ENCODE measurements at regions of chr4 and their contacts with region 1.

Region 1: DNA sequence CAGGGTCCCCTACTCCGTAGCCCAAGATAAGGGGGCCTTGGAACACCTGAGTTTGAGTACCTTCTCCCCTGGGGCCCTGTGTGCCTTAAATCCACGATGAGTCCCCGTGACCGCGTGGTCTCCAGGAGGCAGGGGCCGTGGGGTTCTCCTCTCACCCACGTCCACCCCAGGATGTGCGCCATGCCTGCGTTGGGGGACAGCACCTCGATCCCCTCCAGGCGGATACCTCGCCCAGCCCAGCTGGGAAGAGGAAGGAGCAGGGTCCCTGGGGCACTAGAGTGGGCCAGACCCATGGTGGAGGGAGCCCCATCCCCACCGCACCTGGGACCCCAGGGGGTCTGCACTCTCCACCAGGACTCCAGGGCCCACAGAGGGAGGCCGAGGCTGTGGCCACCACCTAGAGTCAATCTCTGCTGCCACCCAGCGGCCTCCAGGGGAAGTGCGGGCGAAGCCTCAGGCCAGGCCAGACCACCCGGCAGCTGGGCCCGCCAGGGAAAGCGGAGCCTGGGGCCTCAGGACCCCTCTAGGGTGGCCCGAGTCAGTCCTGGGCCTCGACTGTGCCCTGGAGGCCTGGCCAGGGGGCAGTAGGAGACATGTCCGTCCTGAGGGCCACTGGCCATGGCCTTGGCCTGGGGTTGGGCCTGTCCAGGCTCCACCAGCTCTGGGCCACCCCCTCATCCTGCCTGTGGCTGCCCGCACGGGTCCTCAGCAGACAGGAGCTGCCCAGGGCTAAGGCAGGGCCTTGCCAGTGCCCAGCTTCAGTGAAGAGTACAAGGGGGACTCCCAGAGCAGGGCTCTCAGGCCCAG is 55.0 kb downstream of the FAM53A start:
- DNase-seq: peak; percentile 72 to 88 (median 83)
- ATAC-seq: peak; percentile 96
- H3K4me3 ChIP-seq: no peak overlapping the region
- H3K27ac ChIP-seq: no peak overlapping the region
- H3K4me1 ChIP-seq: peaks cover 12 to 36% of the 10 kb centered on the region in 2 experiments; a peak in 4 of 5 replicates
- H3K27me3 ChIP-seq: peaks cover 0 to 5% of the 10 kb centered on the region in 2 experiments; a peak in 1 of 5 replicates
- CTCF ChIP-seq: peak; percentile 88 to 94 (median 91)
- EP300 ChIP-seq: no peak
- POLR2A ChIP-seq: no peak
- RAD21 ChIP-seq: peak; percentile 73 to 87

Region 2: DNA sequence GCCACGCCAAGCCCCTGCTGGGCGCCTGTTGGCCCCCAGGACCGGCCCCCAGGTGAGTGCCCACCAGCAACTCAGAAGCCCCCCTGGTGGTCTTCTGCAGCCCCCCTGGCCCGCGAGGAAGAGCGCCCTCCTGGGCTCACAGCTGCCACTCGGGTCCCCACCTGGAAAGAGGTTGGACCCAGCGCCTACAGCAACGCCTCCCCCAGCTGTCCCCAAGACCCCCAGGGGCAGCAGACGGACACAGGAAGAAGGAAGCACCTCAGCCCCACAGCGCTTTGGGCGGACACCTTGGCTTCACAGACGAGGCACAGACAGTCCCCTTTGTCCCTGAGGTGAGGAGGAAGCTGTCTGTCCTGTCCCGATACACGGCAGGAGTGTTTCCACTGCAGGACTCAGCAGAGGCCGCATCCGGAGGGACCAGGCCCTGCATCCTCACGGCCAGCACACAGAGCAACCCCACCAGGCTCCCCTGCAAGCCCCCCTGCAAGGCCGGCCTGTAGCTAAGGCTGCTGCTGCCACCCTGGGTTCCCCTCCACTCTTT is 107.2 kb before region 1 on chr4:
- CTCF ChIA-PET with region 1: no interaction called
- POLR2A ChIA-PET with region 1: no interaction called
- in situ Hi-C with region 1: no loop called
- intact Hi-C with region 1: loop called (anchors 1 kb)
- DNase-seq: no peak
- ATAC-seq: no peak
- H3K4me3 ChIP-seq: peak overlapping the region; percentile 37; the same call in 1 of the 2 replicates
- H3K27ac ChIP-seq: peak overlapping the region; percentile 62; the same call in 1 of the 3 replicates
- H3K4me1 ChIP-seq: peaks cover 4 to 46% of the 10 kb centered on the region in 2 experiments
- H3K27me3 ChIP-seq: peaks cover 26 to 59% of the 10 kb centered on the region in 2 experiments; a peak in 4 of 5 replicates
- CTCF ChIP-seq: no peak
- EP300 ChIP-seq: no peak
- POLR2A ChIP-seq: no peak
- RAD21 ChIP-seq: no peak

Region 3: GRCh38 chr4:2059034-2059725 is 430.1 kb after region 1 on chr4 and contains the start of gene NAT8L:
- CTCF ChIA-PET with region 1: no interaction called
- POLR2A ChIA-PET with region 1: no interaction called
- in situ Hi-C with region 1: no loop called
- intact Hi-C with region 1: no loop called
- DNase-seq: peak; percentile 75 to 84 (median 80)
- ATAC-seq: peak; percentile 64
- H3K4me3 ChIP-seq: peak within 1 kb of the TSS; percentile 53
- H3K27ac ChIP-seq: no peak within 1 kb of the TSS
- H3K4me1 ChIP-seq: peaks cover 0 to 54% of the 10 kb centered on the region in 2 experiments; a peak in 3 of 5 replicates
- H3K27me3 ChIP-seq: no peaks in the 10 kb centered on the region
- CTCF ChIP-seq: no peak
- EP300 ChIP-seq: no peak
- POLR2A ChIP-seq: no peak
- RAD21 ChIP-seq: no peak
- polyA plus RNA-seq, gene NAT8L: 0.06 to 0.07 TPM

Measured in K562 (cell line).